Activated T-helper 1 cell treated with anti-CD3 and anti-CD28 coated beads, Interleukin-12 subunit alpha, Interleukin-12 subunit beta, Interleukin-2, Interleukin-4 antibody, amounts not matched to agents 30 ng/mL and 10 ng/mL and 1 ng/mL, durations not matched to agents 14 hours and 24 hours and 36 hours (primary cell): ENCODE measurements at regions of chr22 and their contacts with region 1.

Region 1: GRCh38 chr22:17258015-17258787 is 39.0 kb upstream of the ADA2 start:
- DNase-seq: peak; percentile 68
- H3K4me3 Mint-ChIP-seq: peak overlapping the region; percentile 40
- H3K27ac Mint-ChIP-seq: peak overlapping the region; percentile 63
- H3K4me1 Mint-ChIP-seq: peaks cover 35% of the 10 kb centered on the region
- H3K27me3 Mint-ChIP-seq: peaks cover 16% of the 10 kb centered on the region

Region 2: GRCh38 chr22:17074648-17075002 is 183.6 kb before region 1 on chr22:
- intact Hi-C with region 1: loop called (anchors 2 kb)
- DNase-seq: no peak
- H3K4me3 Mint-ChIP-seq: no peak overlapping the region
- H3K27ac Mint-ChIP-seq: no peak overlapping the region
- H3K4me1 Mint-ChIP-seq: peaks cover 21% of the 10 kb centered on the region
- H3K27me3 Mint-ChIP-seq: peaks cover 36% of the 10 kb centered on the region

Region 3: GRCh38 chr22:17237038-17237668 is 21.0 kb before region 1 on chr22:
- intact Hi-C with region 1: loop called (anchors 2 kb)
- DNase-seq: peak; percentile 52
- H3K4me3 Mint-ChIP-seq: peak overlapping the region; percentile 81
- H3K27ac Mint-ChIP-seq: peak overlapping the region; percentile 76
- H3K4me1 Mint-ChIP-seq: peaks cover 21% of the 10 kb centered on the region
- H3K27me3 Mint-ChIP-seq: no peaks in the 10 kb centered on the region

Region 4: GRCh38 chr22:17268501-17269223 is 10.5 kb after region 1 on chr22:
- intact Hi-C with region 1: loop called (anchors 1 kb)
- DNase-seq: no peak
- H3K4me3 Mint-ChIP-seq: no peak overlapping the region
- H3K27ac Mint-ChIP-seq: no peak overlapping the region
- H3K4me1 Mint-ChIP-seq: peaks cover 63% of the 10 kb centered on the region
- H3K27me3 Mint-ChIP-seq: peaks cover 2% of the 10 kb centered on the region

Region 5: GRCh38 chr22:17281440-17281841 is 23.2 kb after region 1 on chr22:
- intact Hi-C with region 1: loop called (anchors 1 kb)
- DNase-seq: peak; percentile 51
- H3K4me3 Mint-ChIP-seq: peak overlapping the region; percentile 77
- H3K27ac Mint-ChIP-seq: peak overlapping the region; percentile 97
- H3K4me1 Mint-ChIP-seq: peaks cover 31% of the 10 kb centered on the region
- H3K27me3 Mint-ChIP-seq: peaks cover 6% of the 10 kb centered on the region

Region 6: GRCh38 chr22:17767233-17768065 is 509.2 kb after region 1 on chr22:
- intact Hi-C with region 1: loop called (anchors 1 kb)
- DNase-seq: peak; percentile 53
- H3K4me3 Mint-ChIP-seq: peak overlapping the region; percentile 44
- H3K27ac Mint-ChIP-seq: peak overlapping the region; percentile 74
- H3K4me1 Mint-ChIP-seq: peaks cover 42% of the 10 kb centered on the region
- H3K27me3 Mint-ChIP-seq: peaks cover 40% of the 10 kb centered on the region